Heart right ventricle (tissue), 16 donors: ENCODE measurements at regions of chr17 and their contacts with region 1.

Region 1: DNA sequence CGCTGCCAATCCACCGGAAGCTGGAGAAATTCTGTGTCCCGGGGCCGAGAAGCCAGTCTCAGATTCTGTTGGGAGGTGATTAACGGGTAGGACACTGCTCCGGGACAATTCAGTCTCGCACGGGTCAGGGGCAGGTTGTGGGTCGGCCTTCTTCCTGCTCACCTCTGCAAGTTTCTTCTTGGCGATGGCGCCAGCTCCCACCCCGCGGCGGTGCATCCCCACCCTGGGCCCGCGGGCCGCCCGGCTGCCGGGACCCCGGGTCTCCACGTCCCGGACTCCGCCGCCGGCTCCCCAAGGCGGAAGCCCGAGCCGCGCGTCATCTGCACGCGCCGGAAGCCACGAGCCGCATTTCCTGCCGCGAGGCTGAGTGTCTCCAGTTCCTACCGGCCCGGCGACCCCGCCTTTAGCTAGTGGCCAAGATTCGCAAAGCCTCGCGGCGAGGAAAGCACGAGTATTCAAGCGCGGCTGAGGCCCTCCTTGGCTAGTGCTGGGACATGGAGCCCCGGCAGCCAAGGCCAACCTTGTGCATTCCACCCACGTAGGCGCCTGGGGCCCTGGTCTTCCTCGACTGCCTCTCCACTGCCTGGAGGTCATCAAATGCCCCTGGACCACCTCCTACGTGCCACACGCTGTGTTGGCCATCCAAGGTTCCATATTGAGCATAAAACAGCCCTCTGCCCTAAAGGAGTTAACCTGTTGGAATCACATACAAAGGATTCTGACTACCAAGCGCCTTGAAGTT is at the start of gene SNF8:
- DNase-seq: peak; percentile 92
- ATAC-seq: peak; percentile 95 to 99 (median 97)
- H3K4me3 ChIP-seq: peak within 1 kb of the TSS; percentile 56 to 96 (median 80)
- H3K27ac ChIP-seq: peak within 1 kb of the TSS; percentile 79 to 97 (median 87)
- H3K4me1 ChIP-seq: peaks cover 4 to 26% (median 21%) of the 10 kb centered on the region in 9 donors
- H3K27me3 ChIP-seq: peaks cover 0 to 5% (median 0%) of the 10 kb centered on the region in 7 donors
- CTCF ChIP-seq: no peak
- total RNA-seq, gene SNF8: 90.0 to 111 (median 104) TPM

Region 2: GRCh38 chr17:48892940-48893645 is 51.6 kb before region 1 on chr17:
- intact Hi-C with region 1: loop called in 1 of 10 experiments (anchors 5 kb)
- DNase-seq: peak in 1 of 2 donors; percentile 25
- ATAC-seq: peak in 2 of 8 donors; percentile 3 to 27
- H3K4me3 ChIP-seq: peak overlapping the region; percentile 70 to 91 (median 77)
- H3K27ac ChIP-seq: peak overlapping the region; percentile 57 to 93 (median 88)
- H3K4me1 ChIP-seq: peaks cover 0 to 29% (median 24%) of the 10 kb centered on the region in 9 donors
- H3K27me3 ChIP-seq: no peaks in the 10 kb centered on the region
- CTCF ChIP-seq: no peak

Region 3: DNA sequence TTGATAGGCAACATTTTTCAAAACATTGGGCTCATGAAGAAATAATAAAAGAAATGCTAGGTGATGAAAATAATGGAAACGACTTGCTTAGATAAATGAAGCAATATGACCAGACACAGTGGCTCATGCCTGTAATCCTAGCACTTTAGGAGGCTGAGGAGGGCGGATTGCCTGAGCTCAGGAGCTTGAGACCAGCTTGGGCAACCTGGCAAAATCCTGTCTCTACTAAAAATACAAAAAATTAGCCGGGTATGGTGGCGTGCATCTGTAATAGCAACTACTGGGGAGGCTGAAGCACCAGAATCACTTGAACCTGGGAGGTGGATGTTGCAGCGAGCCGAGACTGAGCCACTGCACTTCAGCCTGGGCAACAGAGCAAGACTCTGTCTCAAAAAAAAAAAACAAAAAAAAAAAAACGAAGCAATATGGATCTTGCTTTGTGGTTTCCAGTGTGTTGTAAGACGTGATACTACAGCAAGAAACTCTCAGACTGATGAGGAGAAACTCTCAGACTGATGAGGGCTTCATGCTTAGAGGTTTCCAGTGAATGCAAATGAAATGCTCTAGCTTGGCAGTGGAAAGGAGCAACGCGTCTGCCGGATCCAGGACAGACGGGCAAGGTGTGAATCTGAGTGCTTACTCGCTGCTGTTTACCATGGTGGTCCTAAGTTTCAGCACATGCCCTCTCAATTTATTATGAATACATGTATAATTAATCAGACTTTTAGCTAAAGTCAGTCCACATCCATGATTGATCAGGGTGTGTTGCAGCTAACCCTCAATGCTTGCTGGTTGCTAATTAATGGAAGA is 41.0 kb after region 1 on chr17:
- intact Hi-C with region 1: no loop called
- DNase-seq: no peak
- ATAC-seq: no peak
- H3K4me3 ChIP-seq: no peak overlapping the region
- H3K27ac ChIP-seq: no peak overlapping the region
- H3K4me1 ChIP-seq: no peaks in the 10 kb centered on the region
- H3K27me3 ChIP-seq: peaks cover 0 to 94% (median 88%) of the 10 kb centered on the region in 7 donors
- CTCF ChIP-seq: no peak